ENCODE measurements at regions of chr10 and their contacts with region 1.

Region 1: GRCh38 chr10:44981172-44982113 is 2.8 kb upstream of the DEPP1 start:
- DNase-seq: peak; percentile 71 to 89
- H3K4me3 ChIP-seq: peak overlapping the region in 1 of 2 donors; percentile 22
- H3K27ac ChIP-seq: peak overlapping the region; percentile 90 to 96
- H3K4me1 ChIP-seq: peaks cover 11 to 87% (median 78%) of the 10 kb centered on the region in 4 donors
- H3K27me3 ChIP-seq: no peaks in the 10 kb centered on the region
- CTCF ChIP-seq: no peak

Region 2: GRCh38 chr10:43970717-43971116 is 1010.7 kb before region 1 on chr10:
- intact Hi-C with region 1: loop called (anchors 5 kb)
- DNase-seq: no peak
- H3K4me3 ChIP-seq: no peak overlapping the region
- H3K27ac ChIP-seq: no peak overlapping the region
- H3K4me1 ChIP-seq: peaks cover 0 to 8% (median 6%) of the 10 kb centered on the region in 4 donors
- H3K27me3 ChIP-seq: no peaks in the 10 kb centered on the region
- CTCF ChIP-seq: no peak

Region 3: GRCh38 chr10:44995914-44996636 is 14.6 kb after region 1 on chr10:
- intact Hi-C with region 1: loop called (anchors 2 kb)
- DNase-seq: peak; percentile 91 to 94
- H3K4me3 ChIP-seq: peak overlapping the region in 1 of 2 donors; percentile 31
- H3K27ac ChIP-seq: peak overlapping the region; percentile 90 to 91
- H3K4me1 ChIP-seq: peaks cover 6 to 95% (median 89%) of the 10 kb centered on the region in 4 donors
- H3K27me3 ChIP-seq: no peaks in the 10 kb centered on the region
- CTCF ChIP-seq: no peak

Region 4: GRCh38 chr10:45144326-45145070 is 163.1 kb after region 1 on chr10:
- intact Hi-C with region 1: no loop called
- DNase-seq: no peak
- H3K4me3 ChIP-seq: no peak overlapping the region
- H3K27ac ChIP-seq: no peak overlapping the region
- H3K4me1 ChIP-seq: no peaks in the 10 kb centered on the region
- H3K27me3 ChIP-seq: no peaks in the 10 kb centered on the region
- CTCF ChIP-seq: no peak

Region 5: GRCh38 chr10:46050941-46051623 is 1069.6 kb after region 1 on chr10:
- intact Hi-C with region 1: no loop called
- DNase-seq: no peak
- H3K4me3 ChIP-seq: no peak overlapping the region
- H3K27ac ChIP-seq: no peak overlapping the region
- H3K4me1 ChIP-seq: no peaks in the 10 kb centered on the region
- H3K27me3 ChIP-seq: peaks cover 0 to 3% of the 10 kb centered on the region in 2 donors
- CTCF ChIP-seq: no peak

Measured in tibial artery (tissue), 4 donors.